ENCODE measurements at regions of chr16 and their contacts with region 1.

Region 1: DNA sequence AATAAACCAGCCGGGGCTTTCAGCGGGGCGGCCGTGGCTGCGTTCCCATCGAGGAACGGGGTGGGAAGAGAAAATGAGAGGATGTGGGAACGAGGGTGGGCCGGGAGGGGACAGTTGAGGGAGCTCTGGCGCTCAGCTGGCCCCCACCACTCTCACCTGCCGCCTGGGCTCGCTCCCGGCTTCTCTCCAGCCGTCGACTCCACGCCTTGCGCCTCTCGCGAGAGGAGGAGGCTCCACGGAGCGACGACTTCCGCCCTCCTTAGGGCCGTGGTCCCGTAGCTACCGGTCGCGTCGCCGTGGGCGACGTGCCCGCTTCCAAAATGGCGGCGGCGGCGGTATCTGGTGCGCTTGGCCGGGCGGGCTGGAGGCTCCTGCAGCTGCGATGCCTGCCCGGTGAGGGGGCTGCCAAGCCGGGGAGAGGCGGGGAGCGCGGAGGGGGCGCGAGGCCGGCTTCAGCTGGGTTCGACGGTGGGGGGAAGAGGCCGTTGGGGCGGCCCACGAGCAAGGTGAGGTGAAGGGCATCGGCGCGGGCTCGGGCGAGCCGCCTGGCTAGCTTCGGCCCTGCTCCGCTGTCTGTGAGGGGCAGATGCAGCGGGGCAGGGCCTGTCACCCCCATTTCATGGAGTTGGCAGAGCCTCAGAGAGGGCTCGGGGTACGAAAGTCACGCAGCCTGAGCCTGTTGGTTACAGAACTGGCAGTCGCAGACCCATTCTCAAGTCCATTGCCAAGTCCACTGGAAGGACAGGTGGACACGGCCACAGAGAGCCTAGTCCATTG is at the starts of genes CIAPIN1 and COQ9:
- DNase-seq: peak; percentile 81 to 96 (median 92)
- ATAC-seq: peak; percentile 98 to 99
- H3K4me3 Mint-ChIP-seq: peak within 1 kb of the TSS; percentile 89 to 96 (median 92)
- H3K27ac Mint-ChIP-seq: peak within 1 kb of the TSS; percentile 84 to 97 (median 92)
- H3K4me1 Mint-ChIP-seq: peaks cover 15 to 55% (median 41%) of the 10 kb centered on the region in 4 donors
- H3K27me3 Mint-ChIP-seq: no peaks in the 10 kb centered on the region
- polyA plus RNA-seq, gene CIAPIN1: 81.1 to 143 (median 108) TPM
- polyA plus RNA-seq, gene COQ9: 22.8 to 59.0 (median 29.7) TPM

Region 2: DNA sequence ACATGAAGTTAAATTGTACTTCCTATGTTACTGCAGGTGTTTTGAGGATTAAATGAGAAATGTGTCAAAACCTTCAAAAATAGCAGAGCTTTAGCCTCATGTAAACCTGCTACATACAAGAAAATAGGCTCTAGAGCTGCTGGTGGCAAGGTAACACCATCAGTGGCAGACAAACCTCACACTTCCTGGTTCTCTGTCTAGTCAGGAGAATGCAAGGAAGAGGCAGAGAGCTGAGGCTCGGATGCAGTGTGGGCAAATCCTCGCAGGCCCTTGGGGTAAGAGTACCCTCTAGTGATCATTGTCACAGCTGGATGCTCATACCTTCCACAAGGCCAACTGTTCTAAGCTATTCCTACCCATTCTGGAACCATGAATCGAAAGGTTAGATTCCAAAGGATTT is 14.4 kb before region 1 on chr16:
- POLR2A ChIA-PET with region 1: interaction called, 23 read pairs
- DNase-seq: peak in 2 of 10 donors; percentile 17 to 22
- ATAC-seq: peak; percentile 43 to 60
- H3K4me3 Mint-ChIP-seq: peak overlapping the region; percentile 32 to 79 (median 67)
- H3K27ac Mint-ChIP-seq: peak overlapping the region; percentile 73 to 94 (median 90)
- H3K4me1 Mint-ChIP-seq: peaks cover 21 to 50% (median 31%) of the 10 kb centered on the region in 4 donors
- H3K27me3 Mint-ChIP-seq: no peaks in the 10 kb centered on the region

Region 3: GRCh38 chr16:57462209-57462977 is 15.0 kb after region 1 on chr16 and contains the start of gene POLR2C:
- POLR2A ChIA-PET with region 1: interaction called, 58 read pairs
- DNase-seq: peak; percentile 83 to 95 (median 92)
- ATAC-seq: peak; percentile 95 to 98
- H3K4me3 Mint-ChIP-seq: peak within 1 kb of the TSS; percentile 93 to 100 (median 100)
- H3K27ac Mint-ChIP-seq: peak within 1 kb of the TSS; percentile 95 to 100 (median 99)
- H3K4me1 Mint-ChIP-seq: peaks cover 20 to 48% (median 36%) of the 10 kb centered on the region in 4 donors
- H3K27me3 Mint-ChIP-seq: no peaks in the 10 kb centered on the region
- polyA plus RNA-seq, gene POLR2C: 46.7 to 48.6 (median 47.4) TPM